ENCODE measurements at regions of chr15 and their contacts with region 1.

Region 1: GRCh38 chr15:34987985-34988873 is at the start of gene ZNF770:
- DNase-seq: peak; percentile 61 to 91 (median 70)
- H3K4me3 ChIP-seq: peak within 1 kb of the TSS; percentile 70 to 100 (median 93)
- H3K27ac ChIP-seq: peak within 1 kb of the TSS; percentile 71 to 100 (median 98)
- H3K27me3 ChIP-seq: no peaks in the 10 kb centered on the region
- CTCF ChIP-seq: peak in 34 of 56 donors; percentile 9 to 63 (median 36)
- total RNA-seq, gene ZNF770: 32.2 to 74.1 (median 53.0) TPM

Region 2: GRCh38 chr15:34969340-34970097 is 18.7 kb before region 1 on chr15 and contains the start of gene AQR:
- intact Hi-C with region 1: loop called in 1 of 2 experiments (anchors 1 kb)
- DNase-seq: peak; percentile 89 to 98 (median 96)
- H3K4me3 ChIP-seq: peak within 1 kb of the TSS; percentile 62 to 100 (median 90)
- H3K27ac ChIP-seq: peak within 1 kb of the TSS in 53 of 59 donors; percentile 6 to 92 (median 72)
- H3K27me3 ChIP-seq: no peaks in the 10 kb centered on the region
- CTCF ChIP-seq: peak; percentile 64 to 98 (median 86)
- total RNA-seq, gene AQR: 23.5 to 41.1 (median 30.2) TPM

Region 3: DNA sequence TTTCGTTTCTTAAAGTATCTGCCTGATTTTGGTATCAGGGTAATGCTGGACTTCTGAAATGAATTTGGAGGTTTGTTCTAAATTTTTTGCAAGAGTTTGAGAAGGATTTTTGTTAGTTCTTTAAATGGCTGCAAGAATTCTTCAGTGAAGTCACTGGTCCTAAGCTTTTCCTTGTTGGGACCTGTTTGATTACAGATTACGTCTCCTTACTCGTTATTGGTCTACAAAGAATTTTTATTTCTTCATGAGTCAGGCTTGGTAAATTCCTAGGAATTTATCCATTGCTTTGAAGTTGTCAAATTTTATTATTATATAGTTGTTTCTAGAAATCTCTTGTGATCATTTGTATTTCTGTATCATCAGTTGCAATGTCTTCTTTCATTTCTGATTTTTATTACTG is 361.7 kb after region 1 on chr15:
- intact Hi-C with region 1: no loop called
- DNase-seq: no peak
- H3K4me3 ChIP-seq: no peak overlapping the region
- H3K27ac ChIP-seq: no peak overlapping the region
- H3K27me3 ChIP-seq: no peaks in the 10 kb centered on the region
- CTCF ChIP-seq: no peak